ENCODE measurements at regions of chr7 and their contacts with region 1.

Region 1: DNA sequence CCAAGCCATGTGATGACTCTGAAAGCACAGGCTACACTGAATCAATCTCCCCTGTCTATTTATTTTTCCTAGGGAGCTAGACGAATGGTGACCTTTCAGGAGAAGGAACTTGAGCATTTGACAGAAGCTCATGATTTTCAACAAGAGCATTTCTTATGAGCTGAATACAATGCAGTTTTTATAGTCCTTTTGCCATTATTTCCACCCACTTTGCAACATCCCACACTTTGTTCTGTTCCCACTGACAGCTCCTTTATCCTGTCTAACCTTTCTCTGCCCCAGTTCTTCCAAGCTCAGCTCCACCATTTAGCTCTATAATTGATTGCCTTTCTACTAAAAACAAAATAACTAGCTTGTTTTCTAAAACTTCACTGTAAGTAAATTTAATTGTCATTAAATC is 91.9 kb upstream of the PRSS1 start:
- DNase-seq: no peak
- ATAC-seq: no peak
- H3K4me3 ChIP-seq: no peak overlapping the region
- H3K27ac ChIP-seq: no peak overlapping the region
- H3K4me1 ChIP-seq: no peaks in the 10 kb centered on the region
- H3K27me3 ChIP-seq: peaks cover 0 to 6% (median 0%) of the 10 kb centered on the region in 9 donors
- CTCF ChIP-seq: no peak
- POLR2A ChIP-seq: no peak

Region 2: DNA sequence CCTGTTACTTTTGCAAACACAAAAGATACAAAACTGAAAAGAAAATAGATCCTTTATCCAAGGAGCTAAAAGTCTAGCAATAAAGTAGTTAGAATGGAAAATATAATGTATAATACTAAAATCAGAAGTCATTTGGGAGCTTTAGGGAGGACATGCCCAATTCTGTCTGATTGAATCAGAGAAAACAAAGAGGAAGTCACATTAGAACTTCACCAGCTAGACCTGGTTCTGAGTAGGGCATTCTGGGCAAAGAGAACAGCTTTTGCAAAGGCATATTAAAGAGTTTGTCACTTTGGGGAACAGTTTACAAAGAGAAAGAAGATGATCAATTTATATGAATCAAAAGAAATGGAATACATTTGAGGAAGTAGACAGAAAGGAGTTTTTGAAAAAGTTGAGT is 15.1 kb before region 1 on chr7:
- intact Hi-C with region 1: loop called in 1 of 10 experiments (anchors 2 kb)
- DNase-seq: no peak
- ATAC-seq: no peak
- H3K4me3 ChIP-seq: no peak overlapping the region
- H3K27ac ChIP-seq: no peak overlapping the region
- H3K4me1 ChIP-seq: no peaks in the 10 kb centered on the region
- H3K27me3 ChIP-seq: peaks cover 0 to 65% (median 15%) of the 10 kb centered on the region in 9 donors
- CTCF ChIP-seq: no peak
- POLR2A ChIP-seq: no peak

Region 3: GRCh38 chr7:142968229-142968628 is 310.9 kb after region 1 on chr7:
- intact Hi-C with region 1: no loop called
- DNase-seq: no peak
- ATAC-seq: no peak
- H3K4me3 ChIP-seq: no peak overlapping the region
- H3K27ac ChIP-seq: no peak overlapping the region
- H3K4me1 ChIP-seq: peaks cover 0 to 5% (median 0%) of the 10 kb centered on the region in 12 donors
- H3K27me3 ChIP-seq: peaks cover 0 to 20% (median 0%) of the 10 kb centered on the region in 9 donors
- CTCF ChIP-seq: no peak
- POLR2A ChIP-seq: no peak

Measured in heart left ventricle (tissue), 16 donors.